Motor neuron (in vitro differentiated cells): ENCODE measurements at regions of chr15 and their contacts with region 1.

Region 1: GRCh38 chr15:100879464-100880138 is at the start of gene ALDH1A3:
- ATAC-seq: peak; percentile 71 to 87 (median 75)
- H3K4me3 ChIP-seq: peak within 1 kb of the TSS; percentile 20 to 37 (median 33)
- H3K27ac ChIP-seq: no peak within 1 kb of the TSS
- H3K4me1 ChIP-seq: no peaks in the 10 kb centered on the region
- total RNA-seq, gene ALDH1A3: 0.14 to 54.3 (median 2.1) TPM in 6 of 8 experiments, not detected in the others

Region 2: DNA sequence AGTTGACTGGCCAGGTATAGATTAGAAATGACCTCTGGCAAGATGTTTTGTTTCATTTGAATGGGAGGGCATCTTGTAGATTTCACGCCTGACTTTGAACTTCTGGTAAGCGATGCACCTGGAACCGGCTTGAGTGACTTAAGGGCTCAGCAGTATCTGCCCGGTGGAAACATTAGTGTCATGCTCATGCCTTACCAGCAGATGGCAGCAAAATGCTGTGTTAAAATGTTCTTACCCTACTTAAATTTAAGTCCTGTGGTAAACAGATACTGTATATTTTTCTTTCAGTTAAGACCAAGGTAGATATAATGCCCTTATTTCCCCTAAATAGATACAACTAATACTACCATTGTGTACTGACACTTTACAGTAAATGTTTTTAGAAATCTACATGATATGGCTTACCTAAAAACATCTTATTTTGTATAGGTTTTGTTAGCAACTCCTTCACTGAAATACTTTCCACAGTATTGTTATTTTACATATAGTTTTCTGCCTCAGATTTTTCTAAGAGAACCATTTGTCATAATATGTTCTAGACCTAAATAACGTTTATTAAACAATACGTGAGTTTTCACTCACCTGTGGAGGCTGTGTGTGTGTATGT is 251.7 kb before region 1 on chr15:
- in situ Hi-C with region 1: loop called in 2 of 9 experiments (anchors 10 to 25 kb)
- ATAC-seq: peak; percentile 59 to 83 (median 68)
- H3K4me3 ChIP-seq: no peak overlapping the region
- H3K27ac ChIP-seq: no peak overlapping the region
- H3K4me1 ChIP-seq: no peaks in the 10 kb centered on the region

Region 3: DNA sequence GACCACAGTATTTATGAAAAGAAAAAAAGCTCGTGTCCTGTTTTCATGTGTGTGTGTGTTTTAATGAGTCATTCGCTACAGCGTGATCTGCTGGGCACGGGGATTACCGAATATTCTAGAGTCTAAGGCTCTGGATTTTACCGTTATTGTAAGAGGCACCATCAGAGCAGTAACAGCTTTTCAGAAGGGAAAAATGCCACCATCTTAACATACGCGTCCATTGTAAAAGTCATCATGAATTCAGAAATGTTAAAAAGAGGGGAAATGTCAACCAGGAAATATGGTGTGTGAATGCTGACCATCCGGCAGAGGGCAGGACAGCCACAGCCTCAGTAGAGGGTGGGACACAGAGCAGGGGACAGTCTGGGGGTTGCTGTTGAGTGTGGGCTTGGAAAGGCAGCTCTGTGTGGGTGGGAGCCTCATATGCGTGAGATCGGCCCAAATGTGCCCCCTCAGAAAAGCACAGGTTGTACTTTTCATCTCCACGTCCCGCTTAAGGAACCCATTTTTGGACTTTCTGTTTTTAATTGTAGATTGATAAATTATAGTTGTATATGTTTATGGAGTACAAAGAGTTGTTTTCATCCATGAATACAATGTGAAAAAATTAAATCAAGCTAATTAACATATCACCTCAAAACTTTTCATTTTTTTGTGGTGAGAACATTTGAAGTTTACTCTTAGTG is 207.6 kb before region 1 on chr15:
- in situ Hi-C with region 1: loop called in 2 of 9 experiments (anchors 25 kb)
- ATAC-seq: peak in 4 of 8 experiments; percentile 44 to 96 (median 90)
- H3K4me3 ChIP-seq: no peak overlapping the region
- H3K27ac ChIP-seq: no peak overlapping the region
- H3K4me1 ChIP-seq: no peaks in the 10 kb centered on the region

Region 4: DNA sequence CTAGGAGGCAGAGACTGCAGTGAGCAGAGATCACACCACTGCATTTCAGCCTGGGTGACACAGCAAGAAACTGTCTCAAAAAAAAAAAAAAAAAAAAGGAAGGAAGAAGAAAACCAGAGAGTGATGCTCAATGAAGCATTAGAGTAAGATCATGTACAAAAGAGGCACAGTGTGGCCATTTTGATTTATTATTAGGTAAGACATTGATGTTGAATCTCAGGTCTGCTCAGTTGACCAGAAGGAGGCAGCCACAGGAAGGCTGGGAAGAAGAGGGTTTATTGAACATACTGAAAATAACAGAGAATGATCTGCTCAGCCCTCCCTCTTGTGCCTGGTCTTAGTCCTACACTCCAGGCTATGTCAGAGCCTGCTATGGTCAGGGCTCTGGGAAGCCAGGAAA is 55.1 kb after region 1 on chr15:
- in situ Hi-C with region 1: no loop called
- ATAC-seq: peak in 3 of 8 experiments; percentile 54 to 73 (median 71)
- H3K4me3 ChIP-seq: no peak overlapping the region
- H3K27ac ChIP-seq: no peak overlapping the region
- H3K4me1 ChIP-seq: no peaks in the 10 kb centered on the region

Region 5: GRCh38 chr15:100987143-100987542 is 107.5 kb after region 1 on chr15:
- in situ Hi-C with region 1: loop called in 1 of 9 experiments (anchors 25 kb)
- ATAC-seq: peak in 2 of 8 experiments; percentile 28 to 42
- H3K4me3 ChIP-seq: no peak overlapping the region
- H3K27ac ChIP-seq: no peak overlapping the region
- H3K4me1 ChIP-seq: no peaks in the 10 kb centered on the region